ENCODE measurements at regions of chr1 and their contacts with region 1.

Region 1: DNA sequence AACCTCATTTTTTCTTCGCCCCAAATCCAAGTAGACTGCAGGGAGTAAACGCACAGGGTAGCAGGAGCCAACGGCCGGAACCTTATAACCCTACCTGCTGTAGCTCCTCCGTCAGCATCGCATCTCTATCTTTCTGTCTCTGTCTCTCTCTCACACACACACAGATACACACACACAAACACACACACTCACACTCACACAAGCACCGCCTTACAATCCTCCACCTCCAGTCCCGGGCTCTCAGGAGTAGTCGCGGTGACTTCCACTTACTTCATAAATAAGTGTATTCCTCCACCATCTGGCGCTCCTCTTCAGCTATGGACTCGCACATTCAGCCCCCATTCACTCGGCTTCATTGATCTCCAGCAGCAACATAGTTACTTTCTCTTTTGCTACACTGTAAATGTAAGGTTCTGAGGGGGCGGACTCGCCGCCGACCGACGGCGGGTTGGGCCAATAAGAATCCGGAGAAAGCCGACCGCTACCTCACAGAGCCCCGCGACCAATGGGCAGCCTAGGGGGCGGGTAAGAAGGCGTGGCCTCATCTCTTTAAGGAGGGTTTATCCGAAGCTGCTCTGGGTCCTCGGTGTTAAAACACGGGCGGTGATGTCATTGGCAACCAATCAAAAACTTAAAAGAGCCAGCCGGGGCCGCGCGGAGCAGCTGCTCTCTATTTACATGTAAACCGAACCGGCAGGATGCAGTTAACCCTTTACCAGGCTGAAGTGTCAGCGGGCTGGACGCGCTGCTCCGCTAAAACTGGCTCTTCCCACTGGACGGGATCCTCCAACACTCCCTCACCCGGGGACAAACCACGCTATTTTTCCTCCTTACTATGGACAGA is at the start of gene DUSP10:
- DNase-seq: peak; percentile 100
- H3K4me3 ChIP-seq: peak within 1 kb of the TSS; percentile 67 to 82 (median 70)
- H3K27ac ChIP-seq: peak within 1 kb of the TSS; percentile 96 to 99 (median 97)
- H3K4me1 ChIP-seq: peaks cover 0 to 45% (median 36%) of the 10 kb centered on the region in 4 donors
- H3K27me3 ChIP-seq: no peaks in the 10 kb centered on the region
- CTCF ChIP-seq: no peak
- EP300 ChIP-seq: peak in 2 of 4 donors; percentile 44 to 58
- POLR2A ChIP-seq: peak; percentile 88 to 95
- total RNA-seq, gene DUSP10: 11.4 to 19.9 (median 15.7) TPM

Region 2: DNA sequence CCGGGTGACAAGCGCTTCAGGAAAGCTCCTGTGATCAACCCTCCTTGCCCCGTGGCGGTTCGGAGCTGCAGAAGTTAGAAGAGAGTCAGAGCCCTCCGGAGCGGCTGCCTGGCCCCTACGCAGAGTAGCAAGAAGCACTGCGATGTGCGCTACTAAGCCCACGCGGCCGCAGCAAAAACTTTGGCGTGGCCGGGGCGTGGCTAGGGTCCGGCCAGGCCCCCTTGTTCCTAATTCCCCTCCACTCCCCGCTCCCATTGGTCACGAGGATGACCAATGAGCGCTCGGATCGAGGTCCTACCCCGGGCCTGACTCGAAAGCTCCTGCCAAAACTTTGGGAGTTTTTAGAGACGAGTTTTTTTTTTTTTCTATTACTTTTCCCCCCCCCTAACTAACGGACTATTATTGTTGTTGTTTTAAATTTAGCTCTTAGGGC is 862.8 kb before region 1 on chr1 and contains the start of gene HLX:
- intact Hi-C with region 1: loop called (anchors 2 kb)
- DNase-seq: peak; percentile 99
- H3K4me3 ChIP-seq: peak within 1 kb of the TSS; percentile 84 to 97 (median 95)
- H3K27ac ChIP-seq: peak within 1 kb of the TSS; percentile 95 to 100 (median 98)
- H3K4me1 ChIP-seq: peaks cover 0 to 70% (median 57%) of the 10 kb centered on the region in 4 donors
- H3K27me3 ChIP-seq: no peaks in the 10 kb centered on the region
- CTCF ChIP-seq: no peak
- EP300 ChIP-seq: no peak
- POLR2A ChIP-seq: peak; percentile 89 to 98
- total RNA-seq, gene HLX: 28.2 to 53.5 (median 37.8) TPM

Region 3: DNA sequence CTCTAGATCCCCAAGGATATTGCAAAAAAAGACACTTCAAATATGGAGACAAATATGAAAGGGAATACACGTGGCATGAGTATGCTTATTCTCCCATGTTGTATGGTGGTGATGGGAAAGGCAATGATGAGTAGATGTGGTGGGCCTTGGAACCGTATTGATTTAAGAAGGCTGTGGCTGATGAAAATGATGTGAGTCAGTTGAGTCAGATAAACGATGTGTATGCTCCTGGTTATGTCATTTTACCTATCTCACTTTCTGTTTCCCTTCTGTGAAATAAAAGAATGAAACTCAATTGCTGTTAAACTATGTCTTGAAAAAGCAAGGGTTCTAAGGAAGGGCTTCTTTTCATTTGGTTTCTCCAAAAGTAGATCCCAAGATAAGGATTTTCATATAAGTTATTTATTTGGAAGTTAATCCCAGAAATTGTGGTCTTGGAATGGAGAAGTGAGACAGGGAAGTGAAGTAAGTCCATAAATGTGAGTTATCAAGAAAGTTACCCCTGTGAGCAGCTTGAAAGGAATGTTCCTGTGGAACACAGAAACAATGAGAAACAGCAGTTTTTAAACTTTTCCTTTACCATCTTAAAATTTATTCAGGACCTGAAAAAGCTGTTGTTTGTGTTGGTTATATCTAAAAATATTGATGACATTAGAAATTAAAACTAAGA is 292.0 kb before region 1 on chr1:
- intact Hi-C with region 1: loop called (anchors 5 kb)
- DNase-seq: no peak
- H3K4me3 ChIP-seq: no peak overlapping the region
- H3K27ac ChIP-seq: no peak overlapping the region
- H3K4me1 ChIP-seq: peaks cover 0 to 24% (median 12%) of the 10 kb centered on the region in 4 donors
- H3K27me3 ChIP-seq: no peaks in the 10 kb centered on the region
- CTCF ChIP-seq: no peak
- EP300 ChIP-seq: no peak
- POLR2A ChIP-seq: no peak

Region 4: DNA sequence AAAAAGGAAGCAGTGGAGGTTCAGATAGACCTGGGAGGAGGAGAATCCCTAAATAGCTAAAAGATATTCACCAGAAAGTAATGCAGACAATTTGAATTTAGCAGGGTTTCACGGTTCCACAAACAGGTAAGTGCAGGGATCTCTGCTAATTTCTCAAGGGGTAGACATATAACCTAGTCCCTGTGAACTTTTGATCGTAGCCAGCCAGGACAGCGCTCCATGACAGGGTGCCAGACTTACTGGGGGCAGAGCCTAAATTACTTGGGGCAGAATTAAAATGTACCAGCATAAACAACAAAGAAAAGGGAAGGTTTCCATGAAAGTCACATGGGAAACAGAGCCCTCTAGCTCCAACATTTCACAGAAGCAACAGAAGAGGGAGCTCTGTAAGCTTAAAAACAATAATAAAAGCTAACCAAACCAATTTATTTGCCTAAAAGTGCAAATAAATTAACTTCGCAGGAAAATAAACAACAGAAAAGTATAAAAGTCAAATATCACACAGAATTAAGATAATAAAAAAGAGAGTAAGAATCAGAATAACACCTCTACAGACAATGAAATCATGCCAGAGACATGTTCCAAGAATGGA is 198.3 kb before region 1 on chr1:
- intact Hi-C with region 1: loop called (anchors 5 kb)
- DNase-seq: no peak
- H3K4me3 ChIP-seq: no peak overlapping the region
- H3K27ac ChIP-seq: no peak overlapping the region
- H3K4me1 ChIP-seq: peaks cover 0 to 9% (median 6%) of the 10 kb centered on the region in 4 donors
- H3K27me3 ChIP-seq: no peaks in the 10 kb centered on the region
- CTCF ChIP-seq: peak in 3 of 4 experiments; percentile 28 to 59 (median 31)
- EP300 ChIP-seq: no peak
- POLR2A ChIP-seq: no peak

Region 5: GRCh38 chr1:221708987-221709386 is 32.9 kb before region 1 on chr1:
- intact Hi-C with region 1: loop called (anchors 2 kb)
- DNase-seq: peak; percentile 85
- H3K4me3 ChIP-seq: no peak overlapping the region
- H3K27ac ChIP-seq: peak overlapping the region; percentile 74 to 89 (median 81)
- H3K4me1 ChIP-seq: peaks cover 0 to 98% (median 85%) of the 10 kb centered on the region in 4 donors
- H3K27me3 ChIP-seq: no peaks in the 10 kb centered on the region
- CTCF ChIP-seq: no peak
- EP300 ChIP-seq: peak in 3 of 4 donors; percentile 53 to 93 (median 89)
- POLR2A ChIP-seq: no peak

Region 6: DNA sequence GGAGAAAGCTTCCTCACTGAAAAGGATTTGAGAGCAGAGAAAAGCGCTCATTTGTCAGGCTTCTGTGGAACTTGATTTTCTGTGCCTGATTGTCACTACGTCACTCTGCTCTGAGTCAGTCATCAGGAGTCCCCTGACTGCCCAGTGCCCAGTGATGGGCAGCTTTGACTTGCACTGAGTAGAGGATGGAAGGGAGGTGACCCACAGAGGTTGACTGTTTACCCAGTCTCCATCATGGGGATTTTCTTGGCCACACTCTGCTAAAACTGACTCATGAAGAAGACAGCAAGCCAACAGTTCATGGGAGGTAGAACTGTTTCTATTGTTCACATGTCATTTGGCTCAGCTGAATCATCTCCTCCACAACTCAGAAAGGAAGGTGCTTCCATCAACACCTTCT is 82.1 kb after region 1 on chr1:
- intact Hi-C with region 1: no loop called
- DNase-seq: no peak
- H3K4me3 ChIP-seq: no peak overlapping the region
- H3K27ac ChIP-seq: no peak overlapping the region
- H3K4me1 ChIP-seq: no peaks in the 10 kb centered on the region
- H3K27me3 ChIP-seq: no peaks in the 10 kb centered on the region
- CTCF ChIP-seq: no peak
- EP300 ChIP-seq: no peak
- POLR2A ChIP-seq: no peak

Region 7: GRCh38 chr1:222048094-222048595 is 306.2 kb after region 1 on chr1:
- intact Hi-C with region 1: loop called (anchors 5 kb)
- DNase-seq: no peak
- H3K4me3 ChIP-seq: no peak overlapping the region
- H3K27ac ChIP-seq: no peak overlapping the region
- H3K4me1 ChIP-seq: peaks cover 0 to 40% (median 27%) of the 10 kb centered on the region in 4 donors
- H3K27me3 ChIP-seq: no peaks in the 10 kb centered on the region
- CTCF ChIP-seq: no peak
- EP300 ChIP-seq: no peak
- POLR2A ChIP-seq: no peak

Region 8: GRCh38 chr1:222455188-222455879 is 713.4 kb after region 1 on chr1:
- intact Hi-C with region 1: loop called (anchors 5 kb)
- DNase-seq: peak; percentile 93
- H3K4me3 ChIP-seq: peak overlapping the region in 2 of 4 donors; percentile 15 to 22
- H3K27ac ChIP-seq: peak overlapping the region; percentile 31 to 64 (median 42)
- H3K4me1 ChIP-seq: peaks cover 0 to 14% (median 11%) of the 10 kb centered on the region in 4 donors
- H3K27me3 ChIP-seq: no peaks in the 10 kb centered on the region
- CTCF ChIP-seq: peak; percentile 79 to 90 (median 87)
- EP300 ChIP-seq: no peak
- POLR2A ChIP-seq: no peak

Measured in sigmoid colon (tissue), 7 donors.